Gastrocnemius medialis (tissue), 4 donors: ENCODE measurements at regions of chr7 and their contacts with region 1.

Region 1: GRCh38 chr7:128343554-128344430 is at the start of gene RBM28:
- DNase-seq: peak; percentile 78 to 88
- ATAC-seq: peak; percentile 98
- H3K4me3 ChIP-seq: peak within 1 kb of the TSS; percentile 79 to 96 (median 88)
- H3K27ac ChIP-seq: peak within 1 kb of the TSS; percentile 81 to 92 (median 87)
- H3K4me1 ChIP-seq: peaks cover 27 to 32% of the 10 kb centered on the region in 2 donors
- H3K27me3 ChIP-seq: no peaks in the 10 kb centered on the region
- CTCF ChIP-seq: no peak
- POLR2A ChIP-seq: peak; percentile 56 to 63
- total RNA-seq, gene RBM28: 13.6 to 18.5 (median 16.3) TPM

Region 2: GRCh38 chr7:128381161-128381821 is 37.5 kb after region 1 on chr7:
- in situ Hi-C with region 1: loop called in 3 of 4 experiments (anchors 5 kb)
- intact Hi-C with region 1: no loop called
- DNase-seq: no peak
- ATAC-seq: peak in 1 of 2 donors; percentile 11
- H3K4me3 ChIP-seq: no peak overlapping the region
- H3K27ac ChIP-seq: no peak overlapping the region
- H3K4me1 ChIP-seq: peaks cover 15 to 28% of the 10 kb centered on the region in 2 donors
- H3K27me3 ChIP-seq: no peaks in the 10 kb centered on the region
- CTCF ChIP-seq: peak in 1 of 5 experiments; percentile 42
- POLR2A ChIP-seq: no peak

Region 3: DNA sequence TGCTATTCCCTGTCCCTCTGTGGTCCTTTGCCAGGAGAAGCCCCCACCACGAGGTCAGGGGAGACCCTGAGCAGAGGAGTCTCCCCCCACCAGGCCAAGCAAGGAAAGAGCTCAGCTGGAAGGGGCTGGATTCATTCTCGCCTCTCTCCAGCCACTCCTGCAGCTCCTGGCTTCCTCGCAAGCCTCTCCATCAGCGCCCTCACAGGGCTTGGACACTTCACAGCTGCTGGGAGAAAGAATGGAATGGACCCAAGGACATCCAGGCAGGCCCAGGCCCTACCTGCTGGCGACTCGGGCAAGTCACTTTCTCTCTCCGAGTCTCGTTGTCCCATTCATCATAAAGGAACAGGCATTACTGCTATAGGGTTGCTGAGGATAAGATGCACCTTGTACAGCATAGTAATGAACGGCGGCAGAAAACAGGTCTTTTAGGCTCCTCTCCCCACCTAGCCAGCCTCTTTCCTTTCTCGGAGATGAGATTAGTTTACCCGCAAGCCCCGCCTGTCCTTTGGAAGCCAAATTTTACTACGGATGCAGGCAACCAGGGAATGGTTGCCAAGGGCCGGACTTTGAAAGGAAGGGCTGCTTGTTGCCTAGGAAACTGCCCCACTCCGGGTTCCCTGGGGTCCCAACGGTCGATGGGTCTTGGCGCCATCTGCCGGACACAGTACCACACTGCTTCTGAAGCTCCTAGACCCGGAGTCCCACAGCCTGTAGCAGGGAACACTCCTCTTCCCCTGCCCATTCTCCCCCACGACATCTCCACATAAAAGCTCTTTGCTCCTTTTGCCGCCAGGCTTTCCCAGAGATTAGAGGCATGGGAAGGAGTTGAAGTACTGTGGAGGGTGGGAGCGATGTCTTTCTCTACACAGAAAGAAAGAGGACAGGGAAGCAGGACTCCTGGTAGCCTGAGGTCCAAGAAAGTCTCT is 43.7 kb after region 1 on chr7:
- in situ Hi-C with region 1: loop called in 3 of 4 experiments (anchors 5 kb)
- intact Hi-C with region 1: loop called (anchors 1 kb)
- DNase-seq: peak; percentile 53 to 60
- ATAC-seq: peak; percentile 79 to 86
- H3K4me3 ChIP-seq: peak overlapping the region in 2 of 4 donors; percentile 6 to 30
- H3K27ac ChIP-seq: no peak overlapping the region
- H3K4me1 ChIP-seq: peaks cover 0 to 4% of the 10 kb centered on the region in 2 donors
- H3K27me3 ChIP-seq: no peaks in the 10 kb centered on the region
- CTCF ChIP-seq: peak; percentile 80 to 91 (median 84)
- POLR2A ChIP-seq: no peak

Region 4: DNA sequence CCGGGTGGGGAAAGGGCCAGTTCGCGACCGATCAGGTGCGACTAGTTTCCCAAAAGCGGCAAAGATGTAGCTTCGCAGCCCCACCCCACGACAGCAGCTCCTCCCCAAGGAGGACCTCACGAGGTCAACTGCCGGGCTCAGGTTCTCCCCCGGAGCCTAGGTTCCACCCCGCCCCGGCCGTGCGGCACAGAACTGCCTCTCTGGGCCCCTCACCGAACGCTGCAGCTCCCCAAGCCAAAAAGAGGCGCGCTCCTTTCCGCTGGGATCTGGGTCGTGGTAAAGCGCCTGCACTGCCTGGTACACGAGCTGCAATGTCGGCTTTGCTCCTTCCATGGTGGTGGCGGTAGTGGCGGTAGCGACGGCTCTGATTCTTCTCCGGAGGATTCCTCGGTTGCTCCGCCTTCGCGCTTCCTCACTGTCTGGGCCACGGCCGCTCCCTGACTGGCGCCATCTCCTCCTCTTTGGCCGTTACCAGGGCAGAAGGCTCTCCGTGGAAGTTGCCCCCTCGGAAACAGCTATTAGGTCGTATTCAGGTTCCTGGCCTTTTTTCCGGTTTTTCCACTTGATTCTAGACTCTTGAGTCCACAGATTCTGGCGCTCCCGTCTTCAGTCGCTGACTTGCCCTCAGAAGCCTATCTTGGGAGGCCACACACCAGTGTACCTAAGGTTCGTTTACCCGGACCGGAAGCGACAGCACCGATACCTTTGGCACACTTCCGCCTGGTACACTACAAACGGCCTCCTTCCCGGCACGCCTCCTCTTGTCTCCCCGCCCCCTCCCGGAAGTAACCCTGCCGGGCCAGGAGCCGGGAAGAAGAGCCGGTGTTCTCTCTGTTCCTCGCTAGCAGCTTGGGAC is 710.9 kb after region 1 on chr7 and contains the start of gene TNPO3:
- in situ Hi-C with region 1: no loop called
- intact Hi-C with region 1: loop called (anchors 5 kb)
- DNase-seq: peak; percentile 92 to 94
- ATAC-seq: peak; percentile 97 to 98
- H3K4me3 ChIP-seq: peak within 1 kb of the TSS; percentile 75 to 97 (median 91)
- H3K27ac ChIP-seq: peak within 1 kb of the TSS; percentile 90 to 98 (median 96)
- H3K4me1 ChIP-seq: peaks cover 19 to 30% of the 10 kb centered on the region in 2 donors
- H3K27me3 ChIP-seq: no peaks in the 10 kb centered on the region
- CTCF ChIP-seq: peak in 1 of 5 experiments; percentile 8
- POLR2A ChIP-seq: peak; percentile 66 to 85
- total RNA-seq, gene TNPO3: 39.1 to 50.9 (median 50.5) TPM